ENCODE measurements at regions of chr4 and their contacts with region 1.

Region 1: DNA sequence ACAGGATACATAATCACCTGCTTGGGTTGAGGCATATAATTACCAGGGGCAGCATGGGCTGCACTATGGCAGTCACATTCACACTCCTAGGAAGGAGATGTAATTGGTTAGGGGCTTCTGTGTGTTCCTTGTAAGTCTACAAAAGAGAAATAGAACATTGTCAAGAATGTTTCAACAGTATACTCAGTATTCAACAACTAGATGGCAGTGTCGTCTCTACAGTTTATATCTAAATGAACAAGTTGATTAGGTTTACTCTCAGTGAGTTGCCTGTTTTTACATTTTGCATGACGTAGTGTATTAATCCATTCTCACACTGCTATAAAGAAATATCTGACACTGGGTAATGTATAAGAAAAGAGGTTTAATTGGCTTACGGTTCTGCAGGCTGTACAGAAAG is 50.5 kb upstream of the RAB33B start:
- H3K4me3 ChIP-seq: no peak overlapping the region
- H3K27ac ChIP-seq: no peak overlapping the region
- H3K4me1 ChIP-seq: no peaks in the 10 kb centered on the region
- CTCF ChIP-seq: no peak

Region 2: GRCh38 chr4:139416073-139416673 is 12.7 kb after region 1 on chr4:
- CTCF ChIA-PET with region 1: interaction called, 12 read pairs
- POLR2A ChIA-PET with region 1: no interaction called
- H3K4me3 ChIP-seq: no peak overlapping the region
- H3K27ac ChIP-seq: no peak overlapping the region
- H3K4me1 ChIP-seq: no peaks in the 10 kb centered on the region
- CTCF ChIP-seq: no peak

Measured in HEK293 (cell line).